ENCODE measurements at regions of chr7 and their contacts with region 1.

Region 1: GRCh38 chr7:4775250-4775847 is at the start of gene AP5Z1:
- DNase-seq: peak; percentile 90 to 97 (median 96)
- ATAC-seq: peak; percentile 91
- H3K4me3 Mint-ChIP-seq: peak within 1 kb of the TSS; percentile 95 to 99 (median 98)
- H3K27ac Mint-ChIP-seq: peak within 1 kb of the TSS; percentile 97 to 99 (median 98)
- H3K4me1 Mint-ChIP-seq: peaks cover 30 to 55% (median 50%) of the 10 kb centered on the region in 4 donors
- H3K27me3 Mint-ChIP-seq: no peaks in the 10 kb centered on the region
- polyA plus RNA-seq, gene AP5Z1: 25.2 to 44.1 (median 34.1) TPM

Region 2: DNA sequence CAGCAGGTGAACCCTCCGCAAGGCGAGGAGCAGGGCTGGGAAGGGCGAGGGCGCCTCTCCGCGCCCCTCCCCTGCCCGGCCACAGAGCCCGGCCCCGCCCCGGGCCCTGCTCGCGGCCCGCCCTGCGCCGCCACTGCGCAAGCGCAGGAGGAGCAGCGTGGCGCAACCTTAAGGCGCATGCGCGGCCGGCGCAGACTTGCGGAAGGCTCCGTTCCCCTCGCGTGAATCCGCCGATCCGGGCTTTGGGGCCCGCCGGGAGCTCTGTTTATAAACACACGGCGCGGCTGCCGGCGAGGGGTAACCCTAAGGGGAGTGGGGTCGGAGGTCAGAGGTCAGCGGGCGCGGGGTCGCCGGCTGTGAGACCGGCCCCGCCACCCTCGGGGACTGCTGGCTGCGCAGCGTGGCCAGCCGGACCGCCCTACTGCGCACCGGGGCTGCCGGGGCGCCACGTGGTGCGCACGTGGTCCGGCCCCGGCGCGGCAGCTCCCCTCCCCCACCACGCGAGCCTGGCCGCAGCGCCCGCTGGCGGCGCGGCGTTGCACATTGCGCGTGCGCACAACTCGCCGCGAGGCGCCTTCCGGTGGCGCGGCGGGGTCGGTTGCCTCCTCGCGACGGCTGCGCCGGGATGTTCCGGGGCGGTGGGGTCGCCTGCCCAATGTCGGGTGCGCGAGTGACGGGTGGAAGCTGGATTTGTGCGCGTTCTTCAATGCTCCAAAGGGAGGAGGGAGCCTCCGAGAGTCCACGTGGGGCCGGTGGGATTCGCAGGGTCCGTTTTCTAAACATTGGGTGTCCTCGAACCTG is 133.5 kb before region 1 on chr7:
- POLR2A ChIA-PET with region 1: interaction called, 79 read pairs
- DNase-seq: peak; percentile 88 to 100 (median 98)
- ATAC-seq: peak; percentile 81
- H3K4me3 Mint-ChIP-seq: peak overlapping the region; percentile 83 to 94 (median 91)
- H3K27ac Mint-ChIP-seq: peak overlapping the region; percentile 94 to 98 (median 96)
- H3K4me1 Mint-ChIP-seq: peaks cover 5 to 17% (median 10%) of the 10 kb centered on the region in 4 donors
- H3K27me3 Mint-ChIP-seq: no peaks in the 10 kb centered on the region

Region 3: DNA sequence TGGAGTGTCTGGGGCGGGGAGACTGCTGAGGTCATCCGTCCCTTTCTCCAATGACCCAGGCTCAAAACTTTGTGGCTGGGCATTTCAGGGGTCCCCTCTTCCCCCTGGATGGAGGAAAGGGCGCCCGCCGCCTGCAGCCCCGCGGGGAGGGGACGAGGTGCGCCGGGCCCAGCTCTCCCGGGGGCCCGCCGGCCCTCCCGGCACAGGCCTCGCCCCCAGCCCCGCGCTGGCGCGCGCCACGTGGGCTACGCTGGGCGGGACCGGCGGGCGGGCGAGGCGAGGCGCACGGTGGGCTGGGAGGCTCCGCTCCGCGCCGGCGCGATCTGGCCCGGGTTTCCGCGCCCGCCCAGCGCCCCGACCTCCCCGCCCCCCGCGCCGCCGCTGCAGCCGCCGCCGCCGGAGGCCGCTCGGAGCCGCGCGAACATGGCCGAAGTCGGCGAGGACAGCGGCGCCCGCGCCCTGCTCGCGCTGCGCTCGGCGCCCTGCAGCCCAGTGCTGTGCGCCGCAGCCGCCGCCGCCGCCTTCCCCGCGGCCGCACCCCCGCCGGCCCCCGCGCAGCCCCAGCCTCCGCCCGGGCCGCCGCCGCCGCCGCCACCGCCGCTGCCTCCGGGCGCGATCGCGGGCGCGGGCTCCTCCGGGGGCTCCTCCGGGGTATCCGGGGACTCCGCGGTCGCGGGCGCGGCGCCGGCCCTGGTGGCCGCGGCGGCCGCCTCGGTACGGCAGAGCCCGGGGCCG is 93.3 kb before region 1 on chr7 and contains the start of gene FOXK1:
- POLR2A ChIA-PET with region 1: interaction called, 39 read pairs
- DNase-seq: peak; percentile 64 to 88 (median 80)
- ATAC-seq: peak; percentile 80 to 81
- H3K4me3 Mint-ChIP-seq: peak within 1 kb of the TSS; percentile 86 to 99 (median 98)
- H3K27ac Mint-ChIP-seq: peak within 1 kb of the TSS; percentile 91 to 100 (median 96)
- H3K4me1 Mint-ChIP-seq: peaks cover 18 to 40% (median 32%) of the 10 kb centered on the region in 4 donors
- H3K27me3 Mint-ChIP-seq: no peaks in the 10 kb centered on the region
- polyA plus RNA-seq, gene FOXK1: 2.3 to 5.6 (median 3.6) TPM

Region 4: DNA sequence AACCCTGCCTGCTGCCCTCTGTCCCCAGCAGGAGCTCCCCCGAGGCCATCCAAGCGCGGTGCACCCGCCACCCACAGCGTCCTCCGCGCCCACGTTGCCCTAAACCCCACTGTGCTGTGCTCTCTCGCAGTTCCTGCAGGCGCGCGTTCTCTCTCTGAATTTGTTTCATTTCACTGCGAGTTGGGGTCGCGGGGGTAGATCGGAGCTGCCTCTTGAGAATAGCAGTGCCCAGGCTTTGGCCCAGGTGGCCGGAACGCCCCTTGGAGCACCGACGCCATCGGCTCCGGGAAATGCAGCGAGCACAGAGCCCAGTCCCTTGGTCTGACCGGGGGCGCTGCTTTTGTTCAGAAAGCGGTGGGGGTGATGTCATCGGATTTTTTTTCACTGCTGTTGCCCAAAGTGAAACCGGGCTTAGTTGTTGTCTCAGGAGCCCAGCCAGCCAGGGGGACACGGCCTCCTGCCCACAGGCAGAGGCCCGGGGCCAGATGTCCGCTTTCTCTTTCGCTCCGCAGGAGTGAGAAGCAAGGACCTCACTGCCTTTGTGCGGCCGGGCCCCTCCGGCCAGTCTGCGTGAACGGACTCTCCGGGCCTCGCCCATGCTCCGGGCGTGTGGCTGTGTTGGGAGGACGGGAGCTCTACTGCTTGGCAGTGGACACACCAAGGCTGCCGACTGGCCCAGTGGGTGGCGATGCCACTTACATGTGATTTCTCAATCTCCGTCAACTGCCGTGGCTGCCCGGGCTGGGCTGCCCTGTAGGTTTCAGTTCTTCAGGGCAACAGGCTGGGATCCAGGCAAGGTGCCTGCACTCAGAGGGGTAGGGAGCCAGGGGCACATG is 50.1 kb before region 1 on chr7:
- POLR2A ChIA-PET with region 1: interaction called, 29 read pairs
- DNase-seq: peak; percentile 41 to 81 (median 67)
- ATAC-seq: peak; percentile 83 to 85
- H3K4me3 Mint-ChIP-seq: peak overlapping the region; percentile 82 to 97 (median 93)
- H3K27ac Mint-ChIP-seq: peak overlapping the region; percentile 93 to 99 (median 98)
- H3K4me1 Mint-ChIP-seq: peaks cover 24 to 75% (median 63%) of the 10 kb centered on the region in 4 donors
- H3K27me3 Mint-ChIP-seq: no peaks in the 10 kb centered on the region

Region 5: GRCh38 chr7:4744391-4745264 is 30.7 kb before region 1 on chr7:
- POLR2A ChIA-PET with region 1: interaction called, 31 read pairs
- DNase-seq: peak; percentile 57 to 85 (median 72)
- ATAC-seq: peak; percentile 74 to 81
- H3K4me3 Mint-ChIP-seq: peak overlapping the region; percentile 71 to 93 (median 84)
- H3K27ac Mint-ChIP-seq: peak overlapping the region; percentile 84 to 99 (median 97)
- H3K4me1 Mint-ChIP-seq: peaks cover 41 to 81% (median 79%) of the 10 kb centered on the region in 4 donors
- H3K27me3 Mint-ChIP-seq: no peaks in the 10 kb centered on the region

Region 6: GRCh38 chr7:4791738-4792536 is 16.6 kb after region 1 on chr7:
- POLR2A ChIA-PET with region 1: interaction called, 50 read pairs
- DNase-seq: peak; percentile 65 to 92 (median 80)
- ATAC-seq: peak; percentile 83 to 86
- H3K4me3 Mint-ChIP-seq: peak overlapping the region in 8 of 10 donors; percentile 11 to 61 (median 42)
- H3K27ac Mint-ChIP-seq: peak overlapping the region in 7 of 10 donors; percentile 3 to 80 (median 25)
- H3K4me1 Mint-ChIP-seq: peaks cover 5 to 11% (median 9%) of the 10 kb centered on the region in 4 donors
- H3K27me3 Mint-ChIP-seq: no peaks in the 10 kb centered on the region

Measured in naive thymus-derived CD8-positive, alpha-beta T cell (primary cell).